ENCODE measurements at regions of chr11 and their contacts with region 1.

Region 1: DNA sequence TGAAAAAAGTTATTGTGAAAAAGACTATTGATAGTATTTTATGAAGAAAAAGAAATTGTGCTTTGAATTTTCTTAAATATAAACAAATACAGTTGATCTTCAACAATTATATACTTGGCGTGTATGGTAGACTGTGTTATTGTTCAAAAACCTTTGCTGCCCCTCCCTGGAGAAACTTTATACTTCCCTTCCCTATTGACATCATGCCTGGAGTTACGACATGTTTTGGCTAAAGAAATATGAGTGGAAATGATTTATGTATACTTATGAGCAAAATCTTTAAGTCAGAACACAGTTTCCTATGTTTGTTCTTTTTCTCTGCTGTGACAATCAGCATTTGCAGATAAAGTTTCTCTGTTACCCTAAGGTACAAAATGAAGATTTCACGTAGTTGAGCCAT is 243.8 kb downstream of the TMEM135 start:
- DNase-seq: peak; percentile 85
- H3K4me3 Mint-ChIP-seq: no peak overlapping the region
- H3K27ac Mint-ChIP-seq: no peak overlapping the region
- H3K4me1 Mint-ChIP-seq: peaks cover 5% of the 10 kb centered on the region
- H3K27me3 Mint-ChIP-seq: no peaks in the 10 kb centered on the region
- CTCF ChIP-seq: peak; percentile 29

Region 2: DNA sequence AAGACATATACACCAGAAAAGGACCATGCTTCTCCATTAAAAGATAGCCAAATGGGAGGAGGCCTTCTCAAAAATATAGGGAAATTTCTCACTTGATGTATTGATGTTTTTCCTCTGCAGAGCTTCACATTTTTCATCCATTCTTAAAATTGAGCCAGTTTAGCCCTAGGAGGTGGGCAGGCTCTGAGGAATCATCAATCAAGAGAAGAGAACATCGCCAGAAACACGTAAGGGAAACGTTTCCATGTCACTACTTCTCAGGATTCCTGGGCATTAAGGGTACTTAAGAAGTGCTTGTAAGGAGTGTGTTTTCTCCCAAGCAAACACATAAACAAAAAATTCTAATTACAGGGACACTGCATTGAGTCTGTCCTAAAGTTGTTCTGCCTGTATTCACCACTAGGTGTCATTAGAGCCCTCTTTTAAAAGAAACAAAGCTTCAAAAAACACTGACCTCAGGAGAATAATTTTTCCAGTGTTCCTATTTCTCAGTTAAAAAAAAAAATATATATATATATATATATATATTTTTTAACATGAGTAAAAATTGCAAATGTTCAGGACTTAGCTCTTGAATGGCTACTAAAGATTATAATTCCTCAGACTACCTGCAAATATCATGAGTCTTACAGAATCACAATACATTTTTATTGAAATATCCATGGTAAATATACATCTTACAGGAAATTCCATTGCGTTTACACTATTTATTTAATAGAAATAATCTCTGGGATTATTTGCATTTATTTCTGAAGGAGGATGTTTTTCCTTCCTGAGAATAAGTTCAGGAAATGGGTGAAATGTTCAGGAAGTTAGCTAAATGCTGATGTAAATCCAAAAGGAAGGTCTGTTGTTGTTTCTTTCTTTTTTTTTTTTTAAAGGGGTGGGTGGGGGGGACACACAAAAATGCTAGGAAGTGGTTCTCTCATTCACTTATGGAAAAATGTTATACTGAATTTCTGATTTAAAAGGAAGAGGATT is 342.3 kb before region 1 on chr11:
- CTCF ChIA-PET with region 1: interaction called, 51 read pairs
- POLR2A ChIA-PET with region 1: interaction called, 3 read pairs
- intact Hi-C with region 1: loop called (anchors 1 kb)
- DNase-seq: peak; percentile 60
- H3K4me3 Mint-ChIP-seq: no peak overlapping the region
- H3K27ac Mint-ChIP-seq: no peak overlapping the region
- H3K4me1 Mint-ChIP-seq: peaks cover 8% of the 10 kb centered on the region
- H3K27me3 Mint-ChIP-seq: no peaks in the 10 kb centered on the region
- CTCF ChIP-seq: peak; percentile 54

Region 3: GRCh38 chr11:86978756-86979608 is 302.5 kb before region 1 on chr11:
- CTCF ChIA-PET with region 1: interaction called, 6 read pairs
- POLR2A ChIA-PET with region 1: interaction called, 3 read pairs
- intact Hi-C with region 1: loop called (anchors 1 kb)
- DNase-seq: peak; percentile 60
- H3K4me3 Mint-ChIP-seq: no peak overlapping the region
- H3K27ac Mint-ChIP-seq: no peak overlapping the region
- H3K4me1 Mint-ChIP-seq: peaks cover 12% of the 10 kb centered on the region
- H3K27me3 Mint-ChIP-seq: no peaks in the 10 kb centered on the region
- CTCF ChIP-seq: peak; percentile 66

Region 4: GRCh38 chr11:86990515-86990914 is 291.0 kb before region 1 on chr11:
- CTCF ChIA-PET with region 1: interaction called, 10 read pairs
- POLR2A ChIA-PET with region 1: no interaction called
- intact Hi-C with region 1: loop called (anchors 1 kb)
- DNase-seq: peak; percentile 63
- H3K4me3 Mint-ChIP-seq: no peak overlapping the region
- H3K27ac Mint-ChIP-seq: no peak overlapping the region
- H3K4me1 Mint-ChIP-seq: peaks cover 13% of the 10 kb centered on the region
- H3K27me3 Mint-ChIP-seq: no peaks in the 10 kb centered on the region
- CTCF ChIP-seq: no peak

Region 5: GRCh38 chr11:87097582-87097981 is 183.9 kb before region 1 on chr11:
- CTCF ChIA-PET with region 1: interaction called, 5 read pairs
- POLR2A ChIA-PET with region 1: no interaction called
- intact Hi-C with region 1: loop called (anchors 1 kb)
- DNase-seq: peak; percentile 51
- H3K4me3 Mint-ChIP-seq: no peak overlapping the region
- H3K27ac Mint-ChIP-seq: no peak overlapping the region
- H3K4me1 Mint-ChIP-seq: no peaks in the 10 kb centered on the region
- H3K27me3 Mint-ChIP-seq: no peaks in the 10 kb centered on the region
- CTCF ChIP-seq: peak; percentile 47

Region 6: GRCh38 chr11:87259736-87260135 is 21.8 kb before region 1 on chr11:
- CTCF ChIA-PET with region 1: no interaction called
- POLR2A ChIA-PET with region 1: no interaction called
- intact Hi-C with region 1: no loop called
- DNase-seq: no peak
- H3K4me3 Mint-ChIP-seq: no peak overlapping the region
- H3K27ac Mint-ChIP-seq: no peak overlapping the region
- H3K4me1 Mint-ChIP-seq: no peaks in the 10 kb centered on the region
- H3K27me3 Mint-ChIP-seq: no peaks in the 10 kb centered on the region
- CTCF ChIP-seq: no peak

Measured in MCF 10A (cell line).